Activated T-helper 2 cell treated with anti-CD3 and anti-CD28 coated beads, Interferon-gamma antibody, Interleukin-2, Interleukin-4, amounts not matched to agents 10 μg/mL and 5 μg/mL and 100 μg/mL, durations not matched to agents 14 hours and 24 hours and 36 hours (primary cell): ENCODE measurements at regions of chr12 and their contacts with region 1.

Region 1: DNA sequence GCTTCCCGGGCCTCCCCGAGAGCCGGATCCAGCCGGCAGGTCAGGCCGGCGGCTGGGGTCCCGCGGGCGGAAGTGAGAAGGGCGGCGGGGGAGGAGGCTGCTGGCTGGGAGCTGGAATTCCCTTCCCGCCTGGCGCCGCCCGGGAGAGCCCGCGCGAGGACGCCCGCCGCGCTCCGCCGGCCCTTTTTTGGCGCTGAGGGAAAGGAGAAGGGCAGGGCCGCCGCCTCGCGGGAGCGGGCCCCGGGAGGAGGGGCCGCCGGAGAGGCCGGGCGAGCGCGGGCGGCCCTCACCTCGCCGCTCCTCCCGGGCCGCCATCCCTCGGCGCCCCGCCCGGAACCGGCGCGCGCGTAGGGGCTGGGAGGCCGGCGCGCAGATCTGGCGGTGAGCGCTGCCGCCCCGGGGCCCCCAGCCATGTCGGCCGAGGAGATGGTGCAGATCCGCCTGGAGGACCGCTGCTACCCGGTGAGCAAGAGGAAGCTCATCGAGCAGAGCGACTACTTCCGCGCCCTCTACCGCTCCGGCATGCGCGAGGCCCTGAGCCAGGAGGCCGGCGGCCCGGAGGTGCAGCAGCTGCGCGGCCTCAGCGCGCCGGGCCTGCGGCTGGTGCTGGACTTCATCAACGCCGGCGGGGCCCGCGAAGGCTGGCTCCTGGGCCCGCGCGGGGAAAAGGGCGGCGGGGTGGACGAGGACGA is at the starts of genes KLHL42 and MANSC4:
- DNase-seq: peak; percentile 65
- H3K4me3 Mint-ChIP-seq: peak within 1 kb of the TSS; percentile 80
- H3K27ac Mint-ChIP-seq: peak within 1 kb of the TSS; percentile 81
- H3K4me1 Mint-ChIP-seq: peaks cover 28% of the 10 kb centered on the region
- H3K27me3 Mint-ChIP-seq: peaks cover 18% of the 10 kb centered on the region
- total RNA-seq, gene KLHL42: 16.2 and 16.9 TPM in 2 replicates
- total RNA-seq, gene MANSC4: not detected in 2 replicates

Region 2: GRCh38 chr12:27549236-27549800 is 230.7 kb before region 1 on chr12:
- intact Hi-C with region 1: no loop called
- DNase-seq: no peak
- H3K4me3 Mint-ChIP-seq: no peak overlapping the region
- H3K27ac Mint-ChIP-seq: no peak overlapping the region
- H3K4me1 Mint-ChIP-seq: peaks cover 24% of the 10 kb centered on the region
- H3K27me3 Mint-ChIP-seq: peaks cover 37% of the 10 kb centered on the region

Region 3: DNA sequence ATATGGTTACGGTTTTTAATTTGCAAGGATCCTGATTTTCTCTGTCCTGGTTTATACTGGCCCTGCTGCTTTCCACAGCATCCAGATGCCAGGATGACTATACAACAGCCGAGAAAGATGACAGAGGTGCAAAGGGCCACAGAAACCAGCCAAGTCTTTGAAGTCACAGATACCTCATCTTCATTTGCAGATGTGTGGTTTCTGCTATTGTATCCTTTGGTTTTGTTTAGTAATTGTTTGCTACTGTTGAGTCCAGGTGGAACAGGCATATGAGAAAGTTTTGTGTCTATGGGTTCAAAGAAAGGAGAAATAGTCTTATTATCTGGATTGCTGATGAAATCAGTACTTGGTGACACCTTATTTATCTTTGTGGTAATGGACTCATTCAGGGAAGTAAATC is 17.3 kb before region 1 on chr12:
- intact Hi-C with region 1: loop called (anchors 2 kb)
- DNase-seq: no peak
- H3K4me3 Mint-ChIP-seq: no peak overlapping the region
- H3K27ac Mint-ChIP-seq: no peak overlapping the region
- H3K4me1 Mint-ChIP-seq: peaks cover 20% of the 10 kb centered on the region
- H3K27me3 Mint-ChIP-seq: no peaks in the 10 kb centered on the region

Region 4: DNA sequence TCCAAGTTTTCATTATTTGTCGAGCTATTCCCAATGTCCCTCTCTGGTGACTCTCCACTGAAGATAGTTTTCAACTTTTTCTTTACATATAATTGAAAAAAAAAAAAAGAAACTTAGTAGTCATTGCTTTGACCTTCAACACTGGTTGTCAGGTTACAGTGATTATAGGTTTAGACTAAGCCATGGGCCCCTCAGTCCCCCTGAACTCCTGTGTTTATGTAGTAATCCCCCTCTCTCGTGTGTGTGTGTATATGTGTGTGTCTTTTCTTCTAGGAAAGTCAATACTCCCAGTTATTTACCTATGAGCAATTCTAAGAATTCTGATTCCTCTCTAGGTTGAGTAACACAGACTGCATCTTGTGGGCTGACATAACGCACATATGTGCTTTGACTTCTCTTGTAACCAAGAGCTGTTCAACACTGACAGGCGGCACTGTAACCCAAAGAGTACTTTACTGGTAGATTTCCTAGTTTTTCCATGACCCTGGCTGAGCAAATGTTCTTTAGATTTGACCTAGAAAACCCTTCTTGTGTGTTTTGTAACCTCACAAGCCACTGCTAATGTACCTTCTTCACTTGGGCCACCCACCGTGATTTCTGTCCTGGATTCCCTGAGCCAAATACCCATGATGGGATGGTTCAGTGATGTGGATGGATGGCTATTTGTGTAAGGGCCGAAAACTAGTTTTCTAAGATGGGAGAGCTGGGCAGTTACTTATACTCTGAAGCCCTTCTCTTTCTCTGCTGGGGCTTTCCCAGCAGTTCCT is 14.9 kb after region 1 on chr12:
- intact Hi-C with region 1: no loop called
- DNase-seq: no peak
- H3K4me3 Mint-ChIP-seq: no peak overlapping the region
- H3K27ac Mint-ChIP-seq: no peak overlapping the region
- H3K4me1 Mint-ChIP-seq: peaks cover 3% of the 10 kb centered on the region
- H3K27me3 Mint-ChIP-seq: no peaks in the 10 kb centered on the region

Region 5: DNA sequence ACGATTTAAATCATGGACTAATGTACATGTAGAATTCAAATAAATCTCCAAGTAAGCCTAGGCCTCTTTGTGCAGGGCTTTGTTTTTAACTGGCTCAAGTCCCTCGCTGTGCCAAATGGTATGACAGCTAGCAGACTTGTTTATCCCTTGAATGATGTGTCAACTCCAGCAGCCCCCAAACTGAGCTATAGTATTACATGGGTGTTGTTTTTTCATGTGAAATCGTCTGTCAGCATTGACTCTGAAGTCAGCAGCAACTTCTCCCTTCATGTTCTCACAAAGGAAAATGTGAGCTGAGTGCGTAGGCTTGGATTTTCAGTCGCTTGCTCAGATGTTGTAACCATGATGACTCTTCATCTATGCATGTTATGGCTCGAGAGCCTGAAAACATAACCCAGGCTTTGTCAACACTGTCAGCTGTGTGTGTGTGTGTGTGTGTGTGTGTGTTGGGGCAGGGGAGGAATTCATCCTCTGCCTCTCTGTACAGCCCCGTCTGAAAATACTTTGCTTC is 119.1 kb after region 1 on chr12:
- intact Hi-C with region 1: no loop called
- DNase-seq: no peak
- H3K4me3 Mint-ChIP-seq: no peak overlapping the region
- H3K27ac Mint-ChIP-seq: no peak overlapping the region
- H3K4me1 Mint-ChIP-seq: no peaks in the 10 kb centered on the region
- H3K27me3 Mint-ChIP-seq: peaks cover 6% of the 10 kb centered on the region

Region 6: DNA sequence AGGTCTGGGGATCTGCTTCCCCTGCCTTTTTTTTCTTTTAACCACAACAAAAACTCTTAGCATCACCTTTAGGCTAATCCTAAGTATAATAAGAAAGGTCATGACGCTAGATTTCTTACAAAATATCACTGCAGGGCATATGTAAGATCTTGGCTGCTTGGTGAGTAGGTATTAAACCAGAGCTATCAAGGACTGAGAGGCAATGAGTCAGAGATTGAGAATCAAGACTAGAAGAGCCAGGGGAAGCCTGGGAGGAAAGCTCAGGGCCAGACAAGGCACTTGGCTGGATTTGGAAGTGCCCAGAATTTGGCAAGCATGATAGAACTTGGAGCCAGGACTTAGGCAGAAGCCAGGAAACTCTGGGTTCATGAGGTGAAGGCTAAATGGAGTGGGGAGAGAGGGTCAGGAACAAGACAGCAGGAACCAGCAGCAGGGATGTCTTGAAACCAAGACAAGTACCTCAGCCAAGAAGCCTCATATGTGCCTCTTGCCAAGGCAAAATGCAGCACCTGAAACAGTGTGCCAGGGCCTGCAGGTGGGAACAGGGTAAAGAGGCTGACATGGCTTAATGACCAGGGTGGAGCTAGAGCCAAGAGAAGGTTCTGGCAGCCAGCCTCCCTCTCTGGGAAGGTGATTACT is 142.6 kb after region 1 on chr12:
- intact Hi-C with region 1: no loop called
- DNase-seq: no peak
- H3K4me3 Mint-ChIP-seq: no peak overlapping the region
- H3K27ac Mint-ChIP-seq: no peak overlapping the region
- H3K4me1 Mint-ChIP-seq: no peaks in the 10 kb centered on the region
- H3K27me3 Mint-ChIP-seq: peaks cover 12% of the 10 kb centered on the region